ENCODE measurements at regions of chr3 and their contacts with region 1.

Region 1: GRCh38 chr3:21158861-21159542 is 592.0 kb downstream of the ZNF385D start:
- DNase-seq: no peak
- H3K4me3 ChIP-seq: no peak overlapping the region
- H3K27ac ChIP-seq: no peak overlapping the region
- H3K4me1 ChIP-seq: no peaks in the 10 kb centered on the region
- H3K27me3 ChIP-seq: no peaks in the 10 kb centered on the region
- CTCF ChIP-seq: no peak

Region 2: DNA sequence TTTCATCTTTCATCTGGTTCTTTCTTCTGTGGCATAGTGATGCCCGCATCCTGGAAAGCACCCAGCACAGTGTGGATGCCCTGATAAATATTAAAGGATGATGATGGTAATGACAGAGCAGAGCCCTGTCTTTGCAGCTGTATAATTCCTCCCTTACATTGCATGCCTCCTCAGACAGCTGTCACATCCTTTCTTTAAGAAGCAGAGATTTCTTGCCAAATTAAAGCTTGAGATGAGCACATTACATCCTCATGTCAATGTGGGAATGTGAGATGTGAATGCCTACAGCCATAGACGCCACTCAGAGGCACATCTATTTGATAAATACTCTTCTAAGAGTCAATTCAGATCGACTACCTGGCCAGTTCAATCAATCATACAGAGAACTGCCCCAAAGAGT is 49.9 kb before region 1 on chr3:
- CTCF ChIA-PET with region 1: no interaction called
- dilution Hi-C with region 1: loop called (anchors 5 kb)
- in situ Hi-C with region 1: no loop called
- intact Hi-C with region 1: no loop called
- DNase-seq: no peak
- H3K4me3 ChIP-seq: no peak overlapping the region
- H3K27ac ChIP-seq: no peak overlapping the region
- H3K4me1 ChIP-seq: no peaks in the 10 kb centered on the region
- H3K27me3 ChIP-seq: no peaks in the 10 kb centered on the region
- CTCF ChIP-seq: no peak